ENCODE measurements at regions of chr2 and their contacts with region 1.

Region 1: DNA sequence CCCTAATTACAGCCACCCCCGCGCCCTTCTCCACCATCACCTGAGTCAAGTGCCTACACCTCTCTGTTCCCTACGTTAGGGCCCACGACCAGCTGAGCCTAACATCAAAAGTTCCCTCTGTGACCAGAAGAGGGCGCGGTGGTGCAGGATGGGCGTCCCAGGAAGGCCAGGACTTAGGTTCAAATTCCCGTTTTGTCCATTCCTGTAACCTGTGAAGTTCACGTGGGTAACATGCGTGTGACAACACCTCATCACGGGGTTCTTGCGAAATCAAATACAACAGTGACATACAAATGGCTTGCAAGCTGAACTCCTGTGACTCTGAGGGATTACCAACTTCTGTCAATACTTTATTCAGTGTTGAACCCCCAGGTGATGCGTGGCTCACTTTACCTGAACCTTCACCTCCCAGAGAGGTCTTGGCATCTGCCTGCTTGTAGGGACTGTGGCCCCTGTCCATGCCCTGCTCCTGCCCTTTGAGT is 207.9 kb downstream of the ARL4C start:
- DNase-seq: peak; percentile 86 to 92 (median 87)
- H3K4me3 ChIP-seq: no peak overlapping the region
- H3K4me3 Mint-ChIP-seq: peak overlapping the region in 1 of 2 donors; percentile 51
- H3K27ac ChIP-seq: peak overlapping the region in 1 of 2 donors; percentile 93
- H3K27ac Mint-ChIP-seq: peak overlapping the region in 6 of 7 donors; percentile 80 to 98 (median 95)
- H3K4me1 ChIP-seq: peaks cover 40 to 45% of the 10 kb centered on the region in 2 donors
- H3K4me1 Mint-ChIP-seq: peaks cover 49% of the 10 kb centered on the region
- H3K27me3 ChIP-seq: no peaks in the 10 kb centered on the region
- H3K27me3 Mint-ChIP-seq: peaks cover 3 to 11% (median 5%) of the 10 kb centered on the region in 3 donors
- CTCF ChIP-seq: peak; percentile 91

Region 2: DNA sequence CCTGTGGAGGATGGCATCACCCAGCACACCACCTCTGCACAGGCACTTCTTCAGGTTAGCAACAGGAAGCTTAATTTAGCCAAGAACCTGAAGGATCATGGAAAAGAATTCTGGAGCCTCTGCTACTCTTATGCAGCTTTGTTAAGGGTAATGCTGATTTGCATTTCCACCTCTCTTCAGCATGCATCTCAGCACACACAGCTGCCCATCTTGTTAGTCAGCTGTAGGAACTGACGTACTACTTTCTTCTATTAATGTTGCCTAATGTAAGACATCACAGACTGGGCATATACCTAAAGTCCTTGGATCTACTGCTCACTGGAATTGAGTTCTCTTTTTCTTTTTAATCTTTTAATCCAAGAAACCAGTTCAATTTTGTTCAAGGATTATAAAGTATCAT is 57.6 kb before region 1 on chr2:
- intact Hi-C with region 1: no loop called
- DNase-seq: no peak
- H3K4me3 ChIP-seq: no peak overlapping the region
- H3K4me3 Mint-ChIP-seq: no peak overlapping the region
- H3K27ac ChIP-seq: no peak overlapping the region
- H3K27ac Mint-ChIP-seq: no peak overlapping the region
- H3K4me1 ChIP-seq: no peaks in the 10 kb centered on the region
- H3K4me1 Mint-ChIP-seq: no peaks in the 10 kb centered on the region
- H3K27me3 ChIP-seq: no peaks in the 10 kb centered on the region
- H3K27me3 Mint-ChIP-seq: peaks cover 4 to 8% (median 4%) of the 10 kb centered on the region in 3 donors
- CTCF ChIP-seq: no peak

Region 3: GRCh38 chr2:234308813-234309195 is 19.8 kb after region 1 on chr2:
- intact Hi-C with region 1: loop called (anchors 1 to 2 kb)
- DNase-seq: peak; percentile 93 to 96 (median 95)
- H3K4me3 ChIP-seq: no peak overlapping the region
- H3K4me3 Mint-ChIP-seq: peak overlapping the region in 1 of 2 donors; percentile 47
- H3K27ac ChIP-seq: peak overlapping the region; percentile 80 to 94
- H3K27ac Mint-ChIP-seq: peak overlapping the region; percentile 89 to 98 (median 96)
- H3K4me1 ChIP-seq: peaks cover 21 to 26% of the 10 kb centered on the region in 2 donors
- H3K4me1 Mint-ChIP-seq: peaks cover 35% of the 10 kb centered on the region
- H3K27me3 ChIP-seq: peaks cover 3 to 4% of the 10 kb centered on the region in 2 donors
- H3K27me3 Mint-ChIP-seq: peaks cover 2 to 16% (median 10%) of the 10 kb centered on the region in 3 donors
- CTCF ChIP-seq: no peak

Region 4: DNA sequence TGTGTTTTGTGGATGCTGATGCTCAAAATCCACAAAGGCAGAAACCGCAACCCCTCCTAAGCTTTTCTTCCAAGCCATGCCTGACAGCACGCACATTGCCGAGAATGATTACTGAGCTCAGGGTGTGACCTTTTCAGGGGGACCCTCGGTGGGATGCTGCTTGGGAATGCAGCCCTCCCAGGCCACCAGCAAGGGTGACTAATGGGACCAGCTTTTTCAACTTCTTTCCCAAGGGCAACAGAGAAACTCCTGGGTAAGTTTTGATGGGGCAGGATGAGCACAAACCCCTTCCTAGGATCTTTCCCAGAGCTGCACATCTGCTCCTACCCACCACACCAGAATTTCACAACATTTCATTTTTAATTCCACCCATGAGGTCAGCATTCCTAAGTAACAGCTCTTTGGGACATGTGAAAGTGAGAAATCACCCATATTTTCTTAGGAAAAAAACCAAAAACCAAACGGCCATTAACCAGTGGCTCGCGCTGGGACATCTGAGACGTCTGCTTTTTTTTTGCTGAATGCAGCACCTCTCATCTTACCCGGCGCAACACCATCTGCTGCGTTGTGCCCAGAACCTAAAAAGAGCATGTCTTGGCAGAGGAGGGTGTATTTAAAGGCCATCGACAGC is 88.9 kb after region 1 on chr2:
- intact Hi-C with region 1: loop called in 1 of 2 experiments (anchors 10 kb)
- DNase-seq: no peak
- H3K4me3 ChIP-seq: no peak overlapping the region
- H3K4me3 Mint-ChIP-seq: peak overlapping the region in 1 of 2 donors; percentile 22
- H3K27ac ChIP-seq: no peak overlapping the region
- H3K27ac Mint-ChIP-seq: no peak overlapping the region
- H3K4me1 ChIP-seq: no peaks in the 10 kb centered on the region
- H3K4me1 Mint-ChIP-seq: no peaks in the 10 kb centered on the region
- H3K27me3 ChIP-seq: peaks cover 3 to 10% of the 10 kb centered on the region in 2 donors
- H3K27me3 Mint-ChIP-seq: peaks cover 2 to 24% (median 22%) of the 10 kb centered on the region in 3 donors
- CTCF ChIP-seq: no peak

Measured in CD14-positive monocyte (primary cell).